ENCODE measurements at regions of chr15 and their contacts with region 1.

Region 1: DNA sequence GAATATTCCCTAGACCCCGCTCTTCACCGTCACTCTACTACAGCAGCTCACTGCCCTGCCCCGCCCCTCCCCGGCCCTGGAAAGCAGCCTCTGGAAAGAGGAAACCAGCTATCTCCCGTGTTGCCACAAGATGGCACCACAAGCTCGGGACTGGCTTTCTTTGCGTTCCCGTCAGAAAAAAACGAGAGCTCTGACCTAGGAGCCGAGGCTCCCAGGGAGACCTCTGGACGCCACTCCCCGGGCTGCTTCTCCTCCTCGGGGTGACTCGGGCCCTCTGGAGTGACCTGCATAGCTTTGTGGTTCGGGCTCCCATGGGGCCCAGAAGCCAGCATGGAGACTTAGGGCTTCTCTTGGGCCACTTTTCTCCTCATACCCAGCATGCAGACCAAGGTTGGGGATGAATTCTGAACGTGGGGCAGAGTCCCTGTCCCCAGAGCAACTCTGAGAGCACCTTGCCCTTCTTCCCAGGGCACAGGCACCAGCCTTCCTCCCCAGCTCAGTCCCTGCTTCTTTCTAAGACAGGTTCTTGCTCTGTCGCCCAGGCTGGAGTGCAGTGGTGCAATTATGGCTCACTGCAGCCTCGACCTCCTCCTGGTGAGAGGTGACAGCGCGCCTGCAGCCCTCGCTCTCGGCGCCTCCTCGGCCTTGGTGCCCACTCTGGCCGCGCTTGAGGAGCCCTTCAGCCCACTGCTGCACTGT is 19.0 kb downstream of the STOML1 start:
- DNase-seq: peak; percentile 51
- H3K4me3 ChIP-seq: peak overlapping the region; percentile 29; the same call in 1 of the 2 replicates
- H3K27ac ChIP-seq: no peak overlapping the region
- H3K27me3 ChIP-seq: no peaks in the 10 kb centered on the region
- CTCF ChIP-seq: peak; percentile 92

Region 2: DNA sequence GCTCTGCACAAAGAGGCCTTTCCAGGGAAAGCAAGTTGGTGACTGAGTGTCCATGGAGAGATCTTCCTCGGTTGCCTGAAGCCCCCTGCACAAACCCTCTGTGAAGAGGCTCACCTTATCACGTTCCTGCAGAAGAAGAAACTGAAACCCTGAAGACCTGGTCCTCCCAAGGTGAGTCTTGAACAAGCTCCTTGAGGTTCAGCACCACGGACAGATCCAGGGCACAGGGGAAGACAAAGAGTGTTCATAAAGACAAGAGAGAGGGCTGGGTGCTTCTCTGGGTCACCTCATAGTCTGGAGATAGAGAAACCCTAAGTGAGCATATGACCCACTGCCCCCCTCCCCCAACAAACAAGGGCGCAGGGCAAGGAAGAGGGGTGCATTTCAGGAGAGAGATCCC is 121.4 kb before region 1 on chr15:
- CTCF ChIA-PET with region 1: no interaction called
- POLR2A ChIA-PET with region 1: no interaction called
- DNase-seq: peak; percentile 10
- H3K4me3 ChIP-seq: no peak overlapping the region
- H3K27ac ChIP-seq: no peak overlapping the region
- H3K27me3 ChIP-seq: peaks cover 7% of the 10 kb centered on the region
- CTCF ChIP-seq: no peak

Region 3: DNA sequence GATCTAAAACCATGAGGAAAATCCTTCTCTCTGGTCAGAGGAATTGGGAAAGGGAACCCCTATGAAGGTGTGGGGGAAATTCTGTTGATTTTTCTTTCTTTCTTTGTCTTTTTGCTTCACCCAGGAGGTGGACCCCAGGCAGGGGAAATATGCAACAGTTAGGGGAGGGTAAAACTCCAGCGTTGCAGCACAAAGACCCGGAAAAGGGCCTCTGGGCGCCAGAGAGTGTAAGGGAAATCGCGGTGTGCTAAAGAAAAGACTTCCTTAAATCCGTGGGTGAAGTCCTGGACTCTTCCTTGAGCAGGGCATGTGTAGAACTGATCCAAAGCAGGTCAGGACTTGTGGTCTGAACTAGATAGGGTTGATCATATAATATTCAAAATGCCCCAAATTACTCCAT is 110.9 kb before region 1 on chr15:
- CTCF ChIA-PET with region 1: no interaction called
- POLR2A ChIA-PET with region 1: no interaction called
- DNase-seq: no peak
- H3K4me3 ChIP-seq: no peak overlapping the region
- H3K27ac ChIP-seq: no peak overlapping the region
- H3K27me3 ChIP-seq: peaks cover 40% of the 10 kb centered on the region
- CTCF ChIP-seq: no peak

Region 4: DNA sequence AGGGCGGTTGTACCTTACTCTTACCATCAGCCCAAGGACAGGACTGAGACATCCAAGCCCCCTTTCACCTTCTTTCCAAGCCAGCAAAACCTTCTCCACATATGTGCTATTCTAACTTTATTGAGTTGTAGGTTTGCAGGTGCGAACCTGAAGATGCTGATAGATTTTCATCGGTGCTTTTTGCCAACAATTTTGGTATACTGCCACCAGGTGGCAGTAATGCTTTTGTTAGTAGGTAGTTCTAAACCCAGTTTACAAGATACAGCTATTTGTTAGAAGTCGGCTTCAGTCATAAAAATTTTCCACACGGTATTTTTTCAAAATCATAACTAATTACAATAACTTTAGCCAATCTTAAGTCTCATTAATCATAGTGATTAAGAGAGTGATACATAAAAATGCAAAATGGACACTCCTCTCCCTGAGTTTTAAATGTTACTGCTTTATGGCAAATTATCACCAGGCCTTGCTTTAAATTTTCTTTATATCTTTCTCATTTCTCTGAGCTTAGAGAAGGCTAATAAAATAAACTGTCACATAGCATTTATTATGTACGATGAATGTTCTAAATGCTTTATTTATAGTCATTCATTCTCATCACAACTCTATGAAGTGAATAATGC is 99.1 kb before region 1 on chr15:
- CTCF ChIA-PET with region 1: interaction called, 22 read pairs
- POLR2A ChIA-PET with region 1: no interaction called
- DNase-seq: peak; percentile 18
- H3K4me3 ChIP-seq: no peak overlapping the region
- H3K27ac ChIP-seq: no peak overlapping the region
- H3K27me3 ChIP-seq: peaks cover 34% of the 10 kb centered on the region
- CTCF ChIP-seq: peak; percentile 71

Region 5: GRCh38 chr15:73991726-73992593 is 18.8 kb after region 1 on chr15 and contains the start of gene STOML1:
- CTCF ChIA-PET with region 1: interaction called, 32 read pairs
- POLR2A ChIA-PET with region 1: interaction called, 7 read pairs
- DNase-seq: peak; percentile 72
- H3K4me3 ChIP-seq: peak within 1 kb of the TSS; percentile 70
- H3K27ac ChIP-seq: no peak within 1 kb of the TSS
- H3K27me3 ChIP-seq: no peaks in the 10 kb centered on the region
- CTCF ChIP-seq: peak; percentile 78
- polyA plus RNA-seq, gene STOML1: 7.3 and 10.0 TPM in 2 replicates

Region 6: GRCh38 chr15:74036271-74037170 is 63.4 kb after region 1 on chr15:
- CTCF ChIA-PET with region 1: interaction called, 163 read pairs
- POLR2A ChIA-PET with region 1: interaction called, 10 read pairs
- DNase-seq: peak; percentile 30
- H3K4me3 ChIP-seq: no peak overlapping the region
- H3K27ac ChIP-seq: no peak overlapping the region
- H3K27me3 ChIP-seq: no peaks in the 10 kb centered on the region
- CTCF ChIP-seq: peak; percentile 72

Region 7: DNA sequence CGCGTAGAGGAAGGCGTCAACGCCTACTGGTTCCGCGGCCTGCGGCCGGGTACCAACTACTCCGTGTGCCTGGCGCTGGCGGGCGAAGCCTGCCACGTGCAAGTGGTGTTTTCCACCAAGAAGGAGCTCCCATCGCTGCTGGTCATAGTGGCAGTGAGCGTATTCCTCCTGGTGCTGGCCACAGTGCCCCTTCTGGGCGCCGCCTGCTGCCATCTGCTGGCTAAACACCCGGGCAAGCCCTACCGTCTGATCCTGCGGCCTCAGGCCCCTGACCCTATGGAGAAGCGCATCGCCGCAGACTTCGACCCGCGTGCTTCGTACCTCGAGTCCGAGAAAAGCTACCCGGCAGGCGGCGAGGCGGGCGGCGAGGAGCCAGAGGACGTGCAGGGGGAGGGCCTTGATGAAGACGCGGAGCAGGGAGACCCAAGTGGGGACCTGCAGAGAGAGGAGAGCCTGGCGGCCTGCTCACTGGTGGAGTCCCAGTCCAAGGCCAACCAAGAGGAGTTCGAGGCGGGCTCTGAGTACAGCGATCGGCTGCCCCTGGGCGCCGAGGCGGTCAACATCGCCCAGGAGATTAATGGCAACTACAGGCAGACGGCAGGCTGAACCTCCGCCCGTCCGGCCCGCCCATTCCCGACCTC is 161.4 kb after region 1 on chr15:
- CTCF ChIA-PET with region 1: interaction called, 11 read pairs
- POLR2A ChIA-PET with region 1: no interaction called
- DNase-seq: no peak
- H3K4me3 ChIP-seq: no peak overlapping the region
- H3K27ac ChIP-seq: no peak overlapping the region
- H3K27me3 ChIP-seq: peaks cover 91% of the 10 kb centered on the region
- CTCF ChIP-seq: peak; percentile 57

Region 8: GRCh38 chr15:74322181-74323076 is 349.3 kb after region 1 on chr15:
- CTCF ChIA-PET with region 1: interaction called, 39 read pairs
- POLR2A ChIA-PET with region 1: no interaction called
- DNase-seq: no peak
- H3K4me3 ChIP-seq: no peak overlapping the region
- H3K27ac ChIP-seq: no peak overlapping the region
- H3K27me3 ChIP-seq: peaks cover 8% of the 10 kb centered on the region
- CTCF ChIP-seq: peak; percentile 93